GM10248 (cell line): ENCODE measurements at regions of chr22 and their contacts with region 1.

Region 1: DNA sequence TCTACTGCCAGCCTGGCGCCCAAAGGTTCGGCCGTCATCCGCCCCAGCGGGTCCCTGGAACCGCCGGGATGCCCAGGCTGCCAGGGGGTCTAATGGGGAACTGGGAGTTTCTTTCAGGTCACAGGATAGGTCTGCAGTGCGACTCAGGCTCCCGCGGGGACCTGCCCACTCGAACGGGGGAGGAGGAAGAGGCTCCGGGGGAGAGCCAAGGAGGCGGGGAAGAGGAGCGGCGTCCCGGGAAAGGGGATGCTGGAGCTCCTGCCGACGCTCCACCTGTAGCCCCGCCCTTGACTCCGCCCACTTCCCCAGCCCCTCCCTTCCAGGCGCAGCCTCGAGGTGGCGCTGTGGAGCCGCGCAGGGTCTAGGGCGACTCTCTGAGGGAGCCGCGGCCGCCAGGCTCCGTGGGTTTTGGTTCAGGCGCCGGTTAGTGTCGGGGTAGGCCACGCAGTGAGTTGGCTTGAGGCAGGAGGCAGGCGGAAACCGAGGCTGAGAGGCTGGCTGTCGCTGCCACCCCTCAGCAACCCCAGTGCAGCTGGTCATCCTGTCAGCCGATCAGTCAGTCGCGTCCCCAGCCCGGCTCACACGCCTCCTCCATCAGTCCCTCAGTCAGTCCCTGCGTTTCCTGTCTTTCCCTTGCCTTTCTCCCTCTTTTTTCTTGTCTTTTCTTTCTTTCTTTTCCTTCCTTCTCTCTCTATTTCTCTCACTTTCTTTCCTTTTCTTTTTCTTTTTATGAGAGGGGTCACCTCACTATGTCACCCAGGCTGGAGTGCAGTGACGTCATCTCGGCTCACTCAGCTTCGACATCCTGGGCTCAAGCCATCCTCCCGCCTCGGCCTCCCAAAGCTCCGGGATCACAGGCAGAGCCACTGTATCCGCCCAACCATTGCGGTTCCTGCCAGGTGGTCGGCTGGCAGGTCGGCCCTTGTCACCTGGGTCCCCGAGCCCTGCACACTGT is 26.4 kb downstream of the YWHAH start:
- DNase-seq: peak; percentile 93
- CTCF ChIP-seq: peak; percentile 94

Region 2: DNA sequence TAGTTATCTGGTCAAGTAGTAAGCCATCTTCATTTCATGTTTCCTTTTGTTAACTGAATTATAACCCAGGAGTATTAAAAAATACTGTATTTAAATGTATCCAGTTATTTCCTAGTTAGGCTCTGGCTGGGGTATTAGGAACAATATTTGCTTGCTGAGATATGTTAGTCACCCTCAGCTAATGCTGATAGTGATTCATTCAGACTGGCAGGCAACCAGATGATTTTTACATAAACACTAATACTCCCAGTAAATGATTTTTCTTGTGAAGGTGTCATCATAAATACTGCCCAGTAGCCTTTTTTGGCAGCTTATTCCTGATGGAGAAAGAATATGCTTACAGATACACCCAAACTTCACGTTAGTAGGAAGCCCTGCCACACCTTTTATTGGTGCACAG is 18.3 kb before region 1 on chr22:
- CTCF ChIA-PET with region 1: interaction called, 62 read pairs
- POLR2A ChIA-PET with region 1: no interaction called
- DNase-seq: no peak
- CTCF ChIP-seq: no peak

Region 3: GRCh38 chr22:32050678-32051515 is 80.1 kb after region 1 on chr22:
- CTCF ChIA-PET with region 1: interaction called, 11 read pairs
- POLR2A ChIA-PET with region 1: no interaction called
- DNase-seq: peak; percentile 34
- CTCF ChIP-seq: no peak